ENCODE measurements at regions of chr9 and their contacts with region 1.

Region 1: DNA sequence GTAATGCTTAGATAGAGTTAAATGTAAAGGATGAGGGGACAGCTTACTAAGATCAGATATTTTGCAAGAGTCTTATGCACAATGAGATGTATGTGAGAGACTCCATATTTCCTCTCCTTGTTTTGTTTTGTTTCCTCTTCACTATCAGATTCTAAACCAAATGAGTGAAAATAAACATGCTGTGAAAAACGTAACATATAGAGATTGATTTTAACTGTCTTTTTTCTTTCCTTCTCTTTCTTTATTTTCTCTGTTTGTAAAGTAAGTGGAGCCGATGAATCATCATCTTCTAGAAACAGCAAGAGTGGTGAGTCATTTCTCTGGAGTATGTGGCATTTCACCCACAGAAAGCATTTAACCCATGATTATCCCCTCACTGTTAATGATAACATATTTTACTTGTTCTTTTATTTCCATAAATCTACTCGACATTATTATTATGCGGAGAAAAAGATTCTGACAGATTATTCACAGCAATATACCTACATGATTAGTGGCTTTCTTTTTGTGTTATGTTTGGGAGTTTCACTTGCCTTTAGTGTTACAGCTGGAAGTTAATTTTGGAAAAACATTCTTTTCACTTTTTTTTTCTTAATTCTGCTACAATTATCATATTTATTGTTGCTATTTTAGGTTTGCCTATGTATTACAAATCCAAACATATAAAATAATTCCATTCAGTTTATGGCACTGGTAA is 2.1 kb upstream of the ANXA1 start:
- DNase-seq: peak; percentile 23
- H3K4me3 Mint-ChIP-seq: peak overlapping the region; percentile 28
- H3K27ac Mint-ChIP-seq: peak overlapping the region; percentile 79
- H3K4me1 Mint-ChIP-seq: peaks cover 55% of the 10 kb centered on the region
- H3K27me3 Mint-ChIP-seq: no peaks in the 10 kb centered on the region

Region 2: DNA sequence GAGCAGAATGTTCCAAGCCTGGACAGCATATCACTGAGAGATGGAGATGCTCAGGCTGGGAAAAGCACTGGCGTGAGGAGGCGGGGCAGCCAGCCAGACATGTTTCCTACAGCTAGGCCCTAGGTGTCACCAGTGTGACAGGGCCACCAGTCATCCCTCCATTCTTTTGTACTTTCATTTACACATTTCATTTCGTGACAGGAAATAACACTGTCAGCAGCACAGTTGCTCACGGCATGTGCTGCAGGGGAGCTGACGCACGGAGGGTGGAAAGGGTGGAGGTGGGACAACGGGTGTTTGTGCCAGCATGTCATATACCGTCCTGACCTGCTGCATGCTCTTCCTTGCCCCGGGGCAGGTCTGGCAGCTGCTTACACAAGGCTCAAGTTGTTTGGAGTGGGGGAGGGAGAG is 1366.4 kb before region 1 on chr9:
- CTCF ChIA-PET with region 1: no interaction called
- intact Hi-C with region 1: loop called (anchors 5 kb)
- DNase-seq: peak; percentile 95
- H3K4me3 Mint-ChIP-seq: peak overlapping the region; percentile 67
- H3K27ac Mint-ChIP-seq: peak overlapping the region; percentile 92
- H3K4me1 Mint-ChIP-seq: peaks cover 47% of the 10 kb centered on the region
- H3K27me3 Mint-ChIP-seq: no peaks in the 10 kb centered on the region

Region 3: GRCh38 chr9:72586388-72587130 is 563.0 kb before region 1 on chr9:
- CTCF ChIA-PET with region 1: no interaction called
- intact Hi-C with region 1: loop called (anchors 10 kb)
- DNase-seq: peak; percentile 50
- H3K4me3 Mint-ChIP-seq: no peak overlapping the region
- H3K27ac Mint-ChIP-seq: no peak overlapping the region
- H3K4me1 Mint-ChIP-seq: peaks cover 17% of the 10 kb centered on the region
- H3K27me3 Mint-ChIP-seq: no peaks in the 10 kb centered on the region

Region 4: DNA sequence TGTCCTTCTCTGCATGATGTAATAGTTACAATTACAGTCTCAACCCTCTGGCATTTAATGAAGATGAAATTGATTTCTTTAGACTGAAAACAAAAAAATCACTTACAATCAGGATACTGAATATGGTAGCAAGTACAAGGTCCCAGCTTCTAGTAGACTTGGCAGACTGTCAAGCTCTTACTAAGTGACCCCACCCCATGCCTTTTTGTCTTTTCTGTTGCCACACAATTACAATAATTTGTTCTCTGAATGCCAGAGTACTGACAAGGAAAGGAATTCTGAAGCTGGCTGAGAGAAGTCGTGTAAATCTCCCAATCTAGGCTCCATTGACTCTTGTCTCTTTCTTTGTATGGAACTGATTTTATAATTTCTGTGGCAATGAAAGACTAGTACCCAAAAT is 473.9 kb before region 1 on chr9:
- CTCF ChIA-PET with region 1: no interaction called
- intact Hi-C with region 1: no loop called
- DNase-seq: no peak
- H3K4me3 Mint-ChIP-seq: no peak overlapping the region
- H3K27ac Mint-ChIP-seq: no peak overlapping the region
- H3K4me1 Mint-ChIP-seq: no peaks in the 10 kb centered on the region
- H3K27me3 Mint-ChIP-seq: peaks cover 1% of the 10 kb centered on the region

Region 5: DNA sequence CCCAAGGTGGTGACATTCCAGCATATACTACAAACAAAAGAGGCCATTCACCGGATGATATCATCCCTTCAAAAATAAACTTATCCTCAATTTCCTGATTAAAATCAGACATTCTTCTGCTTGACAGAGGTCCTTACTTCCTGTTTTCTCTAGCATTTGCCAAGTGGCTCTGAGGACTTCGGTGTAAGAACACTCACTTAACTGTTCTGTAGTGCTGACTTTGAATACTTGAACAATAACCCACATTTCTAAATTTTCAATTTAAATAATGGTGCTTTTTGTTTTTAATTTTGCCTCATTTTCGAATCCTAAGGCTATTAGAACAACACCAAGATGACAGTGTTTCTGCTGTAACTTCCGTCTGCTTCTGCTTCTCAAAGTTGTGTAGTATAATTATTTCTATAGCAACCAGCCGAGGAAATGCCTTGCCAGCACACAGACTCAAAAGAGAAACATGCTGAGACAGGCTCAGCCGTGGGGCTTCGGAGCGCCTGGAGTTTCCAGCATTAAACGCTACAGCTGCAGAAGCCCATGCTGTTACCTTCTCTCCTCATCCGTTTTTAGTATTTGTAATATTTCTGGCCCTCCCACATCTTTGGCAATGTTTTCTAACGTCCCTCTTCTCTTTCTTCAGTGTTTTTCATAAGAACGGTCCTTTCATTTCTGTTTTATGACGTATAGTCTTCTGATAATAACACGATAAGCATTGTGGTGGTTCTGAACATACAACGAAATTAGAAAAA is 17.3 kb before region 1 on chr9:
- CTCF ChIA-PET with region 1: interaction called, 9 read pairs
- intact Hi-C with region 1: loop called (anchors 1 kb)
- DNase-seq: peak; percentile 76
- H3K4me3 Mint-ChIP-seq: peak overlapping the region; percentile 79
- H3K27ac Mint-ChIP-seq: peak overlapping the region; percentile 86
- H3K4me1 Mint-ChIP-seq: peaks cover 25% of the 10 kb centered on the region
- H3K27me3 Mint-ChIP-seq: no peaks in the 10 kb centered on the region

Region 6: DNA sequence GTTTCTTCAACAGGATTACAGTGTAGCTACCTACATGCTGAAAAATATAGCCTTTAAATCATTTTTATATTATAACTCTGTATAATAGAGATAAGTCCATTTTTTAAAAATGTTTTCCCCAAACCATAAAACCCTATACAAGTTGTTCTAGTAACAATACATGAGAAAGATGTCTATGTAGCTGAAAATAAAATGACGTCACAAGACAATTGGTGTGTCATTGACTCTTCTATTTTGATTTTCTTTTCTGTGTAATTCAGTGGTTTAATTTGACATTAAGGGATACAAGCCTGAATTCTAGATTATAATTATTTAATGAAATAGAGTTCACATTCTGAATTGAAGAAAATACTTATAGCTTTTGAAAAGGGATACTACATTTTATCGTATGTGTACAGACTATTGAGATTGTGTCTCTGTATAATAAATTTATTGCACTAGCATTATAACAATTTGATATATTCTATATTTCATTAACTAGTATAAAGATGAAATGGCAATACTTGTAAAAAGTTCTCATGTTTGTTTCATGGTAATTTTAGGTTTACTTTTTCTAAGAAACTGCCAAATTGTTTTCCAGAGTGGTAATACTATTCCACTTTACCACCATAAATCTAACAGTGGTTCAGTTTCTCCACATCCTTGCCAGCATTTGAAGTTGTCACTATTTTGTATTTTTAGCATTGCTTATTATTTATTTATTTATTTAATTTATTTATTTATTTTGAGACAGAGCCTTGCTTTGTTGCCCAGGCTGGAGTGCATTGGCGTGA is 20.9 kb after region 1 on chr9:
- CTCF ChIA-PET with region 1: no interaction called
- intact Hi-C with region 1: no loop called
- DNase-seq: no peak
- H3K4me3 Mint-ChIP-seq: no peak overlapping the region
- H3K27ac Mint-ChIP-seq: no peak overlapping the region
- H3K4me1 Mint-ChIP-seq: peaks cover 12% of the 10 kb centered on the region
- H3K27me3 Mint-ChIP-seq: no peaks in the 10 kb centered on the region

Region 7: DNA sequence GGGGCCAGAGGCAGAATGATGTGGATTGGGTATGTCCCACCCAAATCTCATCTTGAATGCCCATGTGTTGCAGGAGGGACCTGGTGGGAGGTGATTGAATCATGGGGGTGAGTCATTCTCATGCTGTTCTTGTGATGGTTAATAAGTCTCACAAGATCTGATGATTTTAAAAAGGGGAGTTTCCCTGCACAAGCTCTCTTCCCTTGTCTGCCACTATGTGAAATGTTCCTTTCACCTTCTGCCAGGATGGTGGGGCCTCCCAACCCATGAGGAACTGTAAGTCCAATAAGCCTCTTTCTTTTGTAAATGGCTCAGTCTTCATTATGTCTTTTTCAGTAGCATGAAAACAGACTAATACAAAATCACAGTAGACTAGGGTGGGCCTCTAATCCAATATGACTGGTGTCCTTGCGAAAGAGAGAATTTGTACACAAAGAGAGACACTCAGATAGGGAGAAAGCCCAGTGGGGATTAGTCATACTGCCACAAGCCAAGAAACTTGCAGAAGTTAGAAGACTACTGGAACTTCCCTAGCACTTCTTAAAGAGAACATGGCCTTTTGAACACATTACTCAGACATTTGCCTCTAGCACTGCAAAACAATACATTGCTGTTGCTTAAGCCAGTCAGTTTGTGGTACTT is 70.6 kb after region 1 on chr9:
- CTCF ChIA-PET with region 1: no interaction called
- intact Hi-C with region 1: loop called (anchors 1 kb)
- DNase-seq: peak; percentile 61
- H3K4me3 Mint-ChIP-seq: no peak overlapping the region
- H3K27ac Mint-ChIP-seq: peak overlapping the region; percentile 91
- H3K4me1 Mint-ChIP-seq: peaks cover 27% of the 10 kb centered on the region
- H3K27me3 Mint-ChIP-seq: peaks cover 44% of the 10 kb centered on the region